ENCODE measurements at regions of chr9 and their contacts with region 1.

Region 1: DNA sequence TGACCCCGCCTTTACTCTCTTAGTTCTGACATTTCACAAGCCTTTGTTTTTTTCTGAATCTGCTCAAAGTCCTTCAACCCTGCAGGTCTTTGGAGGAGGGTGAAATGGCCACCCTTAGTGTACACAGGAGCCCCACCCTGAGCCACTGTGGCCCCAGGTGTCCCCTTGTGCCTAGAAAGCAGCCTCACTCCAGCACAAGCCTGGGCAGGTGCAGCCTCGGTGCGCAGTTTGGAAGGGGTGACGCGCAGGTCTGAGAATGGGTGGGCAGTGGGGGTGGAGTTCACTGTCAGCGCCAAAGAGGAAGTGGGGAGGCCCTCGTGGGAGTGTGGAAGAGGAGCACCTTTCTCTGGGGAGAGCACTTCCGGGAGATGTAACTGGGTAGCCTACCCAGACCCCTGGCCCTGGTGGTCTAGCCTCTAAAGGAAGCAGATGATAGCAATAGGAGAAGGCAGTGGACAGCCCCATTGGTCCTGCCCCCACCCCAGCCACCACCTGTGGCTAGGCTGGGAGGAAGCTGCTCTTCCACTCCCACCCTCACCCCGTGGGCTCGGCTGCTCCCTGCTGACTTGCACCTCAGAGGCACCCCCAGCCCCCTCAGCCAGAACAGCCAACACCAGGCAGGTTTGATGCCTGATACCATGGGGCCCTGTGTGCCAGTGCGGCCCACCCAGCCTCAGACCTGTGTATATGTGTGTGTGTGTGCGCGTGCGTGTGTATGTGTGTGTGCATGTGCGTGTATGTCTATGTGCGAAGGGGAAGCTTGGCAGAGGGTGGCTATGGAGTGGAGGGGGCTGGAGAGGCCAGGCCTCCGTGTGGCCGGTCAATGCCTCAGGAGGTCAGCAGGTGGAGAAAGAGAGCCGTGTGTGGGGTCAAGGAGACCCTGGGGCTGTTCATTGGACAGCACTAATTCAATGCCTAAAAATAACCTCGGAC is 16.8 kb upstream of the DAB2IP start:
- DNase-seq: no peak
- ATAC-seq: peak; percentile 39 to 49 (median 44)
- H3K4me3 ChIP-seq: no peak overlapping the region
- H3K27ac ChIP-seq: no peak overlapping the region
- H3K4me1 ChIP-seq: peaks cover 62% of the 10 kb centered on the region
- H3K27me3 ChIP-seq: no peaks in the 10 kb centered on the region
- CTCF ChIP-seq: peak; percentile 47

Region 2: GRCh38 chr9:121650217-121651007 is 15.8 kb after region 1 on chr9:
- intact Hi-C with region 1: loop called in 1 of 2 experiments (anchors 2 kb)
- DNase-seq: peak; percentile 33 to 72
- ATAC-seq: peak in 3 of 4 donors; percentile 14 to 25 (median 25)
- H3K4me3 ChIP-seq: peak overlapping the region; percentile 73
- H3K27ac ChIP-seq: peak overlapping the region; percentile 63
- H3K4me1 ChIP-seq: peaks cover 55% of the 10 kb centered on the region
- H3K27me3 ChIP-seq: no peaks in the 10 kb centered on the region
- CTCF ChIP-seq: no peak

Region 3: GRCh38 chr9:121686930-121687541 is 52.4 kb after region 1 on chr9:
- intact Hi-C with region 1: loop called in 1 of 2 experiments (anchors 5 kb)
- DNase-seq: peak; percentile 81 to 88
- ATAC-seq: peak; percentile 76 to 89 (median 80)
- H3K4me3 ChIP-seq: no peak overlapping the region
- H3K27ac ChIP-seq: peak overlapping the region; percentile 47
- H3K4me1 ChIP-seq: peaks cover 16% of the 10 kb centered on the region
- H3K27me3 ChIP-seq: no peaks in the 10 kb centered on the region
- CTCF ChIP-seq: peak; percentile 79

Region 4: GRCh38 chr9:121861501-121862180 is 227.0 kb after region 1 on chr9:
- intact Hi-C with region 1: loop called in 1 of 2 experiments (anchors 10 kb)
- DNase-seq: peak; percentile 57 to 76
- ATAC-seq: peak; percentile 87 to 95 (median 92)
- H3K4me3 ChIP-seq: no peak overlapping the region
- H3K27ac ChIP-seq: no peak overlapping the region
- H3K4me1 ChIP-seq: peaks cover 5% of the 10 kb centered on the region
- H3K27me3 ChIP-seq: no peaks in the 10 kb centered on the region
- CTCF ChIP-seq: peak; percentile 50